ENCODE measurements at regions of chr14 and their contacts with region 1.

Region 1: GRCh38 chr14:105045710-105046326 is 19.4 kb downstream of the GPR132 start:
- DNase-seq: peak; percentile 81
- H3K4me3 ChIP-seq: no peak overlapping the region
- H3K27ac ChIP-seq: no peak overlapping the region
- H3K4me1 ChIP-seq: no peaks in the 10 kb centered on the region
- H3K27me3 ChIP-seq: peaks cover 3 to 9% of the 10 kb centered on the region in 2 experiments
- CTCF ChIP-seq: peak; percentile 100
- POLR2A ChIP-seq: no peak

Region 2: GRCh38 chr14:104932676-104933631 is 112.9 kb before region 1 on chr14:
- CTCF ChIA-PET with region 1: interaction called, 13 read pairs
- POLR2A ChIA-PET with region 1: no interaction called
- dilution Hi-C with region 1: no loop called
- intact Hi-C with region 1: loop called (anchors 1 kb)
- DNase-seq: peak; percentile 60
- H3K4me3 ChIP-seq: peak overlapping the region in 2 of 3 experiments; percentile 48 to 49
- H3K27ac ChIP-seq: no peak overlapping the region
- H3K4me1 ChIP-seq: peaks cover 6% of the 10 kb centered on the region
- H3K27me3 ChIP-seq: peaks cover 3 to 11% of the 10 kb centered on the region in 2 experiments
- CTCF ChIP-seq: peak; percentile 42 to 83
- POLR2A ChIP-seq: no peak

Region 3: GRCh38 chr14:104976198-104977007 is 69.4 kb before region 1 on chr14:
- CTCF ChIA-PET with region 1: interaction called, 97 read pairs
- POLR2A ChIA-PET with region 1: no interaction called
- dilution Hi-C with region 1: no loop called
- intact Hi-C with region 1: loop called (anchors 1 kb)
- DNase-seq: peak; percentile 74
- H3K4me3 ChIP-seq: no peak overlapping the region
- H3K27ac ChIP-seq: no peak overlapping the region
- H3K4me1 ChIP-seq: peaks cover 39% of the 10 kb centered on the region
- H3K27me3 ChIP-seq: no peaks in the 10 kb centered on the region
- CTCF ChIP-seq: peak; percentile 90 to 98
- POLR2A ChIP-seq: no peak

Region 4: GRCh38 chr14:104993808-104994591 is 51.8 kb before region 1 on chr14:
- CTCF ChIA-PET with region 1: interaction called, 14 read pairs
- POLR2A ChIA-PET with region 1: no interaction called
- dilution Hi-C with region 1: no loop called
- intact Hi-C with region 1: no loop called
- DNase-seq: no peak
- H3K4me3 ChIP-seq: no peak overlapping the region
- H3K27ac ChIP-seq: no peak overlapping the region
- H3K4me1 ChIP-seq: no peaks in the 10 kb centered on the region
- H3K27me3 ChIP-seq: no peaks in the 10 kb centered on the region
- CTCF ChIP-seq: no peak
- POLR2A ChIP-seq: no peak

Region 5: GRCh38 chr14:105020815-105021655 is 24.8 kb before region 1 on chr14 and contains the start of gene CDCA4:
- CTCF ChIA-PET with region 1: interaction called, 34 read pairs
- POLR2A ChIA-PET with region 1: no interaction called
- dilution Hi-C with region 1: no loop called
- intact Hi-C with region 1: loop called (anchors 2 kb)
- DNase-seq: peak; percentile 96
- H3K4me3 ChIP-seq: peak within 1 kb of the TSS; percentile 68 to 96 (median 72)
- H3K27ac ChIP-seq: peak within 1 kb of the TSS; percentile 80
- H3K4me1 ChIP-seq: peaks cover 58% of the 10 kb centered on the region
- H3K27me3 ChIP-seq: no peaks in the 10 kb centered on the region
- CTCF ChIP-seq: no peak
- POLR2A ChIP-seq: peak; percentile 80
- total RNA-seq, gene CDCA4: 44.5 and 46.3 TPM in 2 replicates

Region 6: GRCh38 chr14:105059035-105059924 is 13.5 kb after region 1 on chr14:
- CTCF ChIA-PET with region 1: interaction called, 15 read pairs
- POLR2A ChIA-PET with region 1: no interaction called
- dilution Hi-C with region 1: no loop called
- intact Hi-C with region 1: no loop called
- DNase-seq: no peak
- H3K4me3 ChIP-seq: no peak overlapping the region
- H3K27ac ChIP-seq: no peak overlapping the region
- H3K4me1 ChIP-seq: peaks cover 20% of the 10 kb centered on the region
- H3K27me3 ChIP-seq: no peaks in the 10 kb centered on the region
- CTCF ChIP-seq: no peak
- POLR2A ChIP-seq: no peak

Region 7: GRCh38 chr14:105267820-105268548 is 222.2 kb after region 1 on chr14:
- CTCF ChIA-PET with region 1: no interaction called
- POLR2A ChIA-PET with region 1: no interaction called
- dilution Hi-C with region 1: no loop called
- intact Hi-C with region 1: no loop called
- DNase-seq: no peak
- H3K4me3 ChIP-seq: no peak overlapping the region
- H3K27ac ChIP-seq: no peak overlapping the region
- H3K4me1 ChIP-seq: no peaks in the 10 kb centered on the region
- H3K27me3 ChIP-seq: no peaks in the 10 kb centered on the region
- CTCF ChIP-seq: no peak
- POLR2A ChIP-seq: no peak